ENCODE measurements at regions of chr3 and their contacts with region 1.

Region 1: GRCh38 chr3:112740835-112741234 is 99.9 kb upstream of the CCDC80 start:
- DNase-seq: peak in 4 of 5 donors; percentile 25 to 43 (median 36)
- H3K4me3 ChIP-seq: no peak overlapping the region
- H3K4me3 Mint-ChIP-seq: peak overlapping the region; percentile 48 to 83 (median 61)
- H3K27ac ChIP-seq: peak overlapping the region; percentile 38
- H3K27ac Mint-ChIP-seq: peak overlapping the region; percentile 52 to 92 (median 85)
- H3K4me1 ChIP-seq: peaks cover 86% of the 10 kb centered on the region
- H3K4me1 Mint-ChIP-seq: peaks cover 48 to 84% (median 68%) of the 10 kb centered on the region in 4 donors
- H3K27me3 ChIP-seq: no peaks in the 10 kb centered on the region
- H3K27me3 Mint-ChIP-seq: no peaks in the 10 kb centered on the region

Region 2: GRCh38 chr3:112334691-112335485 is 405.9 kb before region 1 on chr3:
- CTCF ChIA-PET with region 1: no interaction called
- POLR2A ChIA-PET with region 1: no interaction called
- intact Hi-C with region 1: no loop called
- DNase-seq: no peak
- H3K4me3 ChIP-seq: no peak overlapping the region
- H3K4me3 Mint-ChIP-seq: peak overlapping the region in 7 of 8 donors; percentile 29 to 93 (median 91)
- H3K27ac ChIP-seq: no peak overlapping the region
- H3K27ac Mint-ChIP-seq: peak overlapping the region in 4 of 7 donors; percentile 36 to 69 (median 62)
- H3K4me1 ChIP-seq: peaks cover 27% of the 10 kb centered on the region
- H3K4me1 Mint-ChIP-seq: peaks cover 13 to 48% (median 37%) of the 10 kb centered on the region in 4 donors
- H3K27me3 ChIP-seq: no peaks in the 10 kb centered on the region
- H3K27me3 Mint-ChIP-seq: no peaks in the 10 kb centered on the region

Region 3: DNA sequence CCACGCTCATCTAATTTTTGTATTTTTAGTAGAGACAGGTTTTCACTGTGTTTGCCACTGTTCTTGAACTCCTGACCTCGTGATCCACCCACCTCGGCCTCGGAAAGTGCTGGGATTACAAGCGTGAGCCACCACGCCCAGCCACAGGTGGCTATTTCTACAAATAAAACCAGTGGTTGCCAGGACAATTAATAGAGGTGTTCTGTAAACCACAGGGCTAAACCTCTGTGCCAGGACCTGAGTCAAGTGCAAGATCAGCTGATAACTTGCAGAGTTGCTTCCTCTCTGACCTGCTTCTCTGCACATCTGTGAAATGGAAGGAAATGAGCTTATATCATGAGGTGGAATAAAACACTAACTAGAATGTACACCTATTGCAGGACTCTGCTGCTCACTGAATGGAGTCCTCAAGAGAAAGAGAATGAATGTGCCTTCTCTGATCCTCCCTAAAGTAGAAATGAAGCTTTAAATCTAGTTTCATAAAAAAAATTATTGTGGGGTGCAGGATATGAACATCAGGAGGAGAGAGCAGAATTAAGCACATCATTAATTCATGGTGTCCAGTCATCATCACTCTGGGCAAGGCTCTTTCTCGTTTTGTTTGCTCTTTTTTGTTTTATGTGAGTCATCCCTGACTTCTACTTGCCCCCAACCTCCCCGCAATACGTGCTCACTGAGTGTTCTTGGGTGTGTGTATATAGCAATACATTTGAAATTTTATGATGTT is 33.2 kb after region 1 on chr3:
- CTCF ChIA-PET with region 1: interaction called, 17 read pairs
- POLR2A ChIA-PET with region 1: interaction called, 26 read pairs
- intact Hi-C with region 1: loop called (anchors 2 kb)
- DNase-seq: peak; percentile 48 to 73 (median 62)
- H3K4me3 ChIP-seq: no peak overlapping the region
- H3K4me3 Mint-ChIP-seq: peak overlapping the region; percentile 51 to 79 (median 69)
- H3K27ac ChIP-seq: peak overlapping the region; percentile 18
- H3K27ac Mint-ChIP-seq: peak overlapping the region; percentile 73 to 89 (median 85)
- H3K4me1 ChIP-seq: peaks cover 68% of the 10 kb centered on the region
- H3K4me1 Mint-ChIP-seq: peaks cover 45 to 82% (median 61%) of the 10 kb centered on the region in 4 donors
- H3K27me3 ChIP-seq: no peaks in the 10 kb centered on the region
- H3K27me3 Mint-ChIP-seq: no peaks in the 10 kb centered on the region

Region 4: DNA sequence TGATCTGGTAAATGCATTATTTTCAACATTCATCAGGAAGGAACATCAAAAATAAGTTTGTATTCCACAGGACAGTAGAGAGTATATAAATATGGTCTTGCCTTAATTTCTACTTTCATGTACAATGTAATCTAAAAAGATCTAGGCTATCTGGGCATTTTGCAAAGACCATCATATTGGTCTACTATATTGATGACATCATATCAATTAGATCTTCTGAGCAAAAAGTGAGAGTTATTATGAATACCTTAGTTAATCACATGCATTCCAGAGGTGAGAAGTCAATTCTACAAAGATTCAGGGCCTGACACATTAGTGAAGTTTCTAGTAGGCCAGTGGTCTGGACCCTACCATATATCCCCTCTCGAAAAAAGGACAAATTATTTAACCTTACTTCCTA is 91.9 kb after region 1 on chr3:
- CTCF ChIA-PET with region 1: no interaction called
- POLR2A ChIA-PET with region 1: no interaction called
- intact Hi-C with region 1: no loop called
- DNase-seq: no peak
- H3K4me3 ChIP-seq: no peak overlapping the region
- H3K4me3 Mint-ChIP-seq: no peak overlapping the region
- H3K27ac ChIP-seq: no peak overlapping the region
- H3K27ac Mint-ChIP-seq: no peak overlapping the region
- H3K4me1 ChIP-seq: no peaks in the 10 kb centered on the region
- H3K4me1 Mint-ChIP-seq: peaks cover 0 to 2% (median 0%) of the 10 kb centered on the region in 4 donors
- H3K27me3 ChIP-seq: no peaks in the 10 kb centered on the region
- H3K27me3 Mint-ChIP-seq: no peaks in the 10 kb centered on the region